Heart left ventricle (tissue), 16 donors: ENCODE measurements at regions of chr11 and their contacts with region 1.

Region 1: DNA sequence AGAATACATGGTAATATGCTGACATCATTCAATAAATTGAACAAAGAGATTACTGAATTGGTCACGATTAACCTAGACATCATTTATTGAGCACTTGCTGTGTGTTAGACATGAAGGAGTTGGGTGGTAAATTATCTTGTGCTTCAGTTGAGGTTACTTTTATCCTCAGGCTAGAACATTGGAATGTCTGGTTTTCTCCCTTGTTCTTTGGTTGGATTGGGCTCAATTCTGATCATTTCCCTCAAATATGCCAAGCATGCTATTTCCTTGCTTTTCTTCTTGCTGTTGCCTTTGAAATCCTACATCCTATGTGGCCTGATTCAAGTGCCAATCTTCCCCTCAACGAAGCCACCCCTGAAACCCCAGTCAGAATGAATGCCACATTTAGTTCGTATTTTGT is 65.8 kb downstream of the DEUP1 start:
- DNase-seq: no peak
- ATAC-seq: no peak
- H3K4me3 ChIP-seq: no peak overlapping the region
- H3K27ac ChIP-seq: no peak overlapping the region
- H3K4me1 ChIP-seq: peaks cover 0 to 7% (median 0%) of the 10 kb centered on the region in 12 donors
- H3K27me3 ChIP-seq: no peaks in the 10 kb centered on the region
- CTCF ChIP-seq: no peak
- POLR2A ChIP-seq: no peak

Region 2: DNA sequence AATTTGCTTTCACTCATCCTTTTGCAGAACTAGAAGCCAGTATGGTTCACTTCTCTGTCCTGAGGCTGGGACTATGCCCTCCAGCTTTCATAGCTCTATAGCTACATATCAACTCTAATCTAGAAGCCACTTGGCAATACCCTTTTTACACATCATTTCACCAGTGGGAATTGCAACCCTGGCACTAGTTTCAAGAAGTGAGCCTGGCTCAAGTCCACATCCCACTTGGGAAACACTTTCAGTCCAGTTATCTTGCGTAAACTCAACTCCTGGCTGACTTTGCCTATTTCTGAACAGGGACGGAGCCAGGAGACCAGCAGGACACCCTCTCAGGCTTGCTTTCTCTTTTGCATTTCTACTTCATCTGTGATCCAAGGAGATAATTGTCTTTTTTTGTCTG is 1191.6 kb before region 1 on chr11:
- intact Hi-C with region 1: no loop called
- DNase-seq: peak in 1 of 5 donors; percentile 48
- ATAC-seq: peak in 3 of 4 donors; percentile 43 to 84 (median 60)
- H3K4me3 ChIP-seq: no peak overlapping the region
- H3K27ac ChIP-seq: no peak overlapping the region
- H3K4me1 ChIP-seq: peaks cover 0 to 7% (median 0%) of the 10 kb centered on the region in 12 donors
- H3K27me3 ChIP-seq: peaks cover 0 to 11% (median 0%) of the 10 kb centered on the region in 9 donors
- CTCF ChIP-seq: no peak
- POLR2A ChIP-seq: no peak

Region 3: GRCh38 chr11:93529707-93530467 is 133.6 kb after region 1 on chr11:
- intact Hi-C with region 1: loop called in 1 of 10 experiments (anchors 10 kb)
- DNase-seq: peak in 2 of 5 donors; percentile 28 to 54
- ATAC-seq: peak in 2 of 4 donors; percentile 22 to 36
- H3K4me3 ChIP-seq: peak overlapping the region in 1 of 12 donors; percentile 0
- H3K27ac ChIP-seq: peak overlapping the region; percentile 60 to 91 (median 82)
- H3K4me1 ChIP-seq: peaks cover 20 to 88% (median 54%) of the 10 kb centered on the region in 12 donors
- H3K27me3 ChIP-seq: no peaks in the 10 kb centered on the region
- CTCF ChIP-seq: no peak
- POLR2A ChIP-seq: no peak